ENCODE measurements at regions of chr2 and their contacts with region 1.

Region 1: DNA sequence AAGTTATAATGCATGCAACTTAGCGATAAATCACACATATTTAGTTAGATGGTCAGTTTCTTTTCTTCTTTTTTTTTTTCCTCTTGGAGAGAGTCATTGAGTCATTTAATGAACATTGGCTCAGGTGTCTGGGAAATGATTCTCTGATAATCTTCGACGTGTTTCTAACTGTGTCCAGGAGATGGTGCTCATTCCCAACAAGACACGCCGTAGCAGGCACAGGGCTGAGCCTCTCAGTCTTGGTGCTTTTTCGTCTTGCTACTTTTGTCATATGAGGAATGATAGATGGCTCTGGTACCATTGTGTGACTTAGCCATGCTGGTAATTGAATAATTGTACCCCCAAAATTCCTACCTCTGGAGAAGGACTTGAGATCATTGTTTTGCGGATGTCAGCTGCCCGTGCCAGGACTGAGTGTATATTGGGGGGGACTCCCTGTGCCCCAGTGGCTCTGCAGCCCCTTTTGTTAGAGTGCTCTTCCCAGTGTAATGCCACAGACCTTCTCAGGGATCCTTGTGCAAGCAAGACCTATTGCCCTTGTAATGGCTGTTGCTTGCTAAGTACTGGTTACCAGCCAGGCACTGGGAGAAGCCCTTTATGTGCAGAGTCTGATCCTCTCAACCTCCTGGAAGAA is 107.6 kb upstream of the CYRIA start:
- DNase-seq: peak in 1 of 4 donors; percentile 52
- ATAC-seq: peak; percentile 92
- H3K4me3 ChIP-seq: no peak overlapping the region
- H3K27ac ChIP-seq: no peak overlapping the region
- H3K4me1 ChIP-seq: no peaks in the 10 kb centered on the region
- H3K27me3 ChIP-seq: no peaks in the 10 kb centered on the region
- CTCF ChIP-seq: peak; percentile 10 to 49

Region 2: GRCh38 chr2:16281451-16282336 is 491.5 kb before region 1 on chr2:
- intact Hi-C with region 1: no loop called
- DNase-seq: peak in 2 of 4 donors; percentile 37
- ATAC-seq: peak; percentile 88
- H3K4me3 ChIP-seq: no peak overlapping the region
- H3K27ac ChIP-seq: no peak overlapping the region
- H3K4me1 ChIP-seq: no peaks in the 10 kb centered on the region
- H3K27me3 ChIP-seq: no peaks in the 10 kb centered on the region
- CTCF ChIP-seq: peak; percentile 35 to 43

Region 3: GRCh38 chr2:16948053-16948452 is 174.9 kb after region 1 on chr2:
- intact Hi-C with region 1: no loop called
- DNase-seq: no peak
- ATAC-seq: no peak
- H3K4me3 ChIP-seq: no peak overlapping the region
- H3K27ac ChIP-seq: no peak overlapping the region
- H3K4me1 ChIP-seq: no peaks in the 10 kb centered on the region
- H3K27me3 ChIP-seq: no peaks in the 10 kb centered on the region
- CTCF ChIP-seq: no peak

Region 4: DNA sequence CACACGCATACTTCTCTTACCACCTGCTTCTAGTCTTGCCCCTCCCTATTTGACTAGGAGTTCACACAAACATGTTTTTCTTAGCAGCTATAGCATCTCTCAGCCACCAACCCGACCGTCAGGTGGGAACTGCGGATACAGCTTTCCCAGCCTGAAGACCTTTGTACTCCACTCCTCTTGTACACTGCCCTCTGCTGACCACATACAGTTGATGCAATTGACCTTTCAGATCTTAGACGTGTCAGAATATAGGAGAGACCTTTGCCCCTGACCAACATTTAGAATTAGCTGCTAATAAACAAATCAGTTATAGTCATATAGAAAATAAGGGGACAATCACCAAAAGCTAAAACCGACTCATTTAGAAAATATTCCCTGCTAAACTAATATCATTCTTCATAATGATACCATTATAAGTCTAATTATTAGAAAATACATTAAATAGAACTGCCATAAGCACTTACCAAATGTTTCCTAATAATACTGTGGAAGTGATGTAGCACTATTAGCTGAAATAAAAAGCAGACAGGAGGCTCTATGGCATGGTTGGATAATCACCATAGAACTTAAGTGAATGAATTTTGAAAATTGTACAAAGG is 536.6 kb after region 1 on chr2:
- intact Hi-C with region 1: loop called in 1 of 2 experiments (anchors 10 kb)
- DNase-seq: peak in 2 of 4 donors; percentile 22 to 54
- ATAC-seq: peak; percentile 89
- H3K4me3 ChIP-seq: no peak overlapping the region
- H3K27ac ChIP-seq: no peak overlapping the region
- H3K4me1 ChIP-seq: no peaks in the 10 kb centered on the region
- H3K27me3 ChIP-seq: no peaks in the 10 kb centered on the region
- CTCF ChIP-seq: peak; percentile 49 to 70

Region 5: DNA sequence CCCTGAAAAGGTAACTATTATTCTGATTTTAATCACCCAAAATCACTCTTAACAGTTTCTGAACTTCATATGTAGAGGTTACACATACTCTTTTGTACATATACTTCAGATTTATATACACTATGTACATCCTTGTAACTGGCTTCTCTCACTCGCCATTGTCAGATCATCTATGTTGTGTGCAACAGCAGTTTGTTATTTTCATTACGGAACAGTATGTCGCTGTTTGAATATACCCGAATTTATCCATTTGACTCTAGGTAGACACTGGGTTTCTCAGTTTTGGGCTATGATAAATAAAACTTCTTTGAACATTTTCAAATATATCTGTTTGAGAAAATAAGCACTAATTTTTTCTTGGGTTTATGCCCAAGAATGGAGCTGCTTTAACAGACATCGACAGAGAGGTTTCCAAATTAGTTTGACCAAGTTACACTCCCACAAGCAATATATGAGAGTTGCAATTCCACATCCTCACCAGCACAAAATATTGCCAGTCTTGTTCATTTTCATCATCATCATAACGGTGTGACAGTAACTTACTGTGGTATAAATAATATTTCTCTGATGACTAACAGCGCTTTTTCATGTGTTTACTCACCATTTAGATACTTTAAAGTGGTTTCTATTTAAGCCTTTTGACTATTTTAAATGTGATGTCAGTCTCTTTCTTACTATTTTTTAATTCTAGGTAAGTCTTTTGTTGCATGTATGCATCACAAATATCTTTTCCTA is 899.6 kb after region 1 on chr2:
- intact Hi-C with region 1: loop called in 1 of 2 experiments (anchors 10 kb)
- DNase-seq: no peak
- ATAC-seq: no peak
- H3K4me3 ChIP-seq: no peak overlapping the region
- H3K27ac ChIP-seq: no peak overlapping the region
- H3K4me1 ChIP-seq: no peaks in the 10 kb centered on the region
- H3K27me3 ChIP-seq: no peaks in the 10 kb centered on the region
- CTCF ChIP-seq: no peak

Measured in left lung (tissue), 14 donors.